ENCODE measurements at regions of chr15 and their contacts with region 1.

Region 1: GRCh38 chr15:69593981-69594966 is 141.7 kb downstream of the RPLP1 start:
- DNase-seq: peak; percentile 88 to 89
- ATAC-seq: peak; percentile 74
- H3K4me3 ChIP-seq: no peak overlapping the region
- H3K27ac ChIP-seq: peak overlapping the region; percentile 59 to 94
- H3K4me1 ChIP-seq: peaks cover 0 to 9% of the 10 kb centered on the region in 2 donors
- H3K27me3 ChIP-seq: no peaks in the 10 kb centered on the region

Region 2: GRCh38 chr15:69615736-69616135 is 21.5 kb after region 1 on chr15:
- intact Hi-C with region 1: loop called in 1 of 2 experiments (anchors 1 kb)
- DNase-seq: no peak
- ATAC-seq: no peak
- H3K4me3 ChIP-seq: no peak overlapping the region
- H3K27ac ChIP-seq: no peak overlapping the region
- H3K4me1 ChIP-seq: no peaks in the 10 kb centered on the region
- H3K27me3 ChIP-seq: no peaks in the 10 kb centered on the region

Measured in aorta (tissue), 5 donors.